ENCODE measurements at regions of chr1 and their contacts with region 1.

Region 1: DNA sequence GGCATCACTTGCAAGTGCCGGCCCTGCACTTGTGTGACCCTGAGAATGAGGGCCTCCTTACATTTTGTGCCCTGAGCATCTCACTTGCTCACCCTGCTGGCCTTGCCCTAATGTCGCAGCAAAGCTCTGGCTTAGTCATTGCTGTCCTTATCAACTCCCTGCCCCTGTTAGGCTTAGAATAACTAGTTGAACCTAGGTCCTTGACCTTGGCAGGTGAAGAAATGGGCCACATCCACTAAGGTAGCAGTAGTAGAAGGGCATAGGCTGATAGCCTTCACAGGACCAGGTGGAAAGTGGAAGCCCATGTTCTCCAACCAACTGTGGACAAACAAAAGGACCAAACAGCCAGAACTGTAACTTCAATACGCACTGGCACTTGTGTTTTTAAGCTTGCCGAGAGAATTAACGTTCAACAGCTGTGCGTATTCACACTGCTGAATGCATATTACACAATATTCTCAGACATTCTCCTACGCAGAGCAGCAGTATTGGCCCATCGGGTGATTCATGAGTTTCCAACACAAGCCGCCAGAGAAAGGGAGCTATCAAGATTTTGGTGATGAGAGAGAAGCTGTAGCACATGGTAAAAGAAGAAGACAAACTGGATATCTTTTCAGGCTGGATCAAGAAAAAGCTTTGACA is 27.7 kb upstream of the PTGFRN start:
- DNase-seq: peak in 1 of 2 experiments; percentile 54
- H3K4me3 ChIP-seq: no peak overlapping the region
- H3K27ac ChIP-seq: peak overlapping the region; percentile 26; the same call in 1 of the 2 replicates
- H3K4me1 ChIP-seq: peaks cover 4 to 20% (median 19%) of the 10 kb centered on the region in 4 experiments
- H3K27me3 ChIP-seq: no peaks in the 10 kb centered on the region
- CTCF ChIP-seq: peak; percentile 76 to 91 (median 79)
- EP300 ChIP-seq: no peak
- POLR2A ChIP-seq: no peak
- RAD21 ChIP-seq: peak; percentile 84 to 91

Region 2: GRCh38 chr1:116724765-116725375 is 157.1 kb before region 1 on chr1:
- CTCF ChIA-PET with region 1: interaction called, 10 read pairs
- POLR2A ChIA-PET with region 1: interaction called, 3 read pairs
- DNase-seq: peak in 1 of 2 experiments; percentile 72
- H3K4me3 ChIP-seq: no peak overlapping the region
- H3K27ac ChIP-seq: no peak overlapping the region
- H3K4me1 ChIP-seq: no peaks in the 10 kb centered on the region
- H3K27me3 ChIP-seq: no peaks in the 10 kb centered on the region
- CTCF ChIP-seq: peak in 2 of 3 experiments; percentile 34 to 63; a peak in 2 of 4 replicates
- EP300 ChIP-seq: no peak
- POLR2A ChIP-seq: no peak
- RAD21 ChIP-seq: peak; percentile 59 to 61

Region 3: GRCh38 chr1:116769561-116769977 is 112.4 kb before region 1 on chr1:
- CTCF ChIA-PET with region 1: interaction called, 27 read pairs
- POLR2A ChIA-PET with region 1: no interaction called
- DNase-seq: no peak
- H3K4me3 ChIP-seq: no peak overlapping the region
- H3K27ac ChIP-seq: no peak overlapping the region
- H3K4me1 ChIP-seq: no peaks in the 10 kb centered on the region
- H3K27me3 ChIP-seq: no peaks in the 10 kb centered on the region
- CTCF ChIP-seq: no peak
- EP300 ChIP-seq: no peak
- POLR2A ChIP-seq: no peak
- RAD21 ChIP-seq: no peak

Region 4: DNA sequence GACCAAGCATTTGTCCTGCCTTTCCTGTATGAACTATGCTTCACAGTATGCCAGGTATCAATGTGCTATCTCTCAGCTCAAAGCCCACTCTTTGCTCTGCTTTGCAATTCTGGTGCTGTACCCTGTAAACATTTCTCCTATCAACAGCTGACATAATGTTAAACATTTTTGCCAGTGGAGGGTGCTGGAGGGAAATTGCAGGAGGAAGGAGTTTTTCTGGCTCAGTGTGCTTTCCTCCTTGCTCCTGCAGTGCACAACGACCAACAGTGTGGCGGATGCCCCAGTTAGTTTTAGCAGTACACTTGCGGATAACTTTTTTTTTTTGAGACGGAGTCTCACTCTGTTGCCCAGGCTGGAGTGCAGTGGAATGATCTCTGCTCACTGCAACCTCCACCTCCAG is 39.3 kb before region 1 on chr1:
- CTCF ChIA-PET with region 1: interaction called, 62 read pairs
- POLR2A ChIA-PET with region 1: no interaction called
- DNase-seq: no peak
- H3K4me3 ChIP-seq: no peak overlapping the region
- H3K27ac ChIP-seq: no peak overlapping the region
- H3K4me1 ChIP-seq: no peaks in the 10 kb centered on the region
- H3K27me3 ChIP-seq: no peaks in the 10 kb centered on the region
- CTCF ChIP-seq: peak in 2 of 3 experiments; percentile 39 to 45; a peak in 3 of 4 replicates
- EP300 ChIP-seq: no peak
- POLR2A ChIP-seq: no peak
- RAD21 ChIP-seq: peak; percentile 43 to 63

Region 5: GRCh38 chr1:116902032-116902738 is 20.2 kb after region 1 on chr1:
- CTCF ChIA-PET with region 1: interaction called, 16 read pairs
- POLR2A ChIA-PET with region 1: no interaction called
- DNase-seq: no peak
- H3K4me3 ChIP-seq: no peak overlapping the region
- H3K27ac ChIP-seq: no peak overlapping the region
- H3K4me1 ChIP-seq: no peaks in the 10 kb centered on the region
- H3K27me3 ChIP-seq: no peaks in the 10 kb centered on the region
- CTCF ChIP-seq: no peak
- EP300 ChIP-seq: no peak
- POLR2A ChIP-seq: no peak
- RAD21 ChIP-seq: no peak